Psoas muscle (tissue), 8 donors: ENCODE measurements at regions of chr16 and their contacts with region 1.

Region 1: GRCh38 chr16:3857189-3858043 is 23.1 kb downstream of the CREBBP start:
- DNase-seq: peak in 1 of 2 donors; percentile 46
- ATAC-seq: peak; percentile 86 to 93 (median 92)
- H3K4me3 ChIP-seq: peak overlapping the region; percentile 32
- H3K27ac ChIP-seq: peak overlapping the region; percentile 76
- H3K4me1 ChIP-seq: peaks cover 86% of the 10 kb centered on the region
- H3K27me3 ChIP-seq: no peaks in the 10 kb centered on the region
- CTCF ChIP-seq: no peak

Region 2: DNA sequence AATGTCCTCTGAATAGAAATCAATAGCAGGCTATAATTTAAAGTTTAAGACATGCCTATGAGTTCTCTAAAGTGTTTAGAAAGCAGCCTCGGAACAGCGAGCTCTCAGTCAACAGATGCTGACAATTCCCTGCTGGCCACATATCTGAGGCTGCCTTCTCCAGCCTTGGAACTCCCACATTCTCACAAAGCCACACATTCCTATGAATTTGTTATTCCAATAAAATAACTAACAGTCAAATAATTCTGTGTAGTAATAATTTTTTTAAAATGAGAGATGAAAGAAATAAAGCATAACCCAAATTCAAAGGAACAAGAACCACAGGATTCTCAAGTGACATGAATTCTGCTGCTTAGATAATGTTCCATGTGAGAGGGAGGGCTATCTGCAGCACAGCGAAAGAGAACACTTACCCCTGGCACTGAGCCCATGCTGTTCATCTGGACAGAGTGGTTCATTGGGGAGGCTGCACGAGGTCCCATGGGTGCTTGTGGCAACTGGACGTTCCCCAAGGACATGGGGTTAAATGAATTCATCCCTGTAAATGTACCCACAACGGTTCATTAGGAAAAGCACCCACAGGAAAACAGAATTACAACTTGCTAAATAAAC is 83.2 kb before region 1 on chr16:
- intact Hi-C with region 1: loop called in 1 of 2 experiments (anchors 5 kb)
- DNase-seq: no peak
- ATAC-seq: peak; percentile 44 to 67 (median 58)
- H3K4me3 ChIP-seq: no peak overlapping the region
- H3K27ac ChIP-seq: peak overlapping the region; percentile 46
- H3K4me1 ChIP-seq: peaks cover 25% of the 10 kb centered on the region
- H3K27me3 ChIP-seq: no peaks in the 10 kb centered on the region
- CTCF ChIP-seq: no peak

Region 3: DNA sequence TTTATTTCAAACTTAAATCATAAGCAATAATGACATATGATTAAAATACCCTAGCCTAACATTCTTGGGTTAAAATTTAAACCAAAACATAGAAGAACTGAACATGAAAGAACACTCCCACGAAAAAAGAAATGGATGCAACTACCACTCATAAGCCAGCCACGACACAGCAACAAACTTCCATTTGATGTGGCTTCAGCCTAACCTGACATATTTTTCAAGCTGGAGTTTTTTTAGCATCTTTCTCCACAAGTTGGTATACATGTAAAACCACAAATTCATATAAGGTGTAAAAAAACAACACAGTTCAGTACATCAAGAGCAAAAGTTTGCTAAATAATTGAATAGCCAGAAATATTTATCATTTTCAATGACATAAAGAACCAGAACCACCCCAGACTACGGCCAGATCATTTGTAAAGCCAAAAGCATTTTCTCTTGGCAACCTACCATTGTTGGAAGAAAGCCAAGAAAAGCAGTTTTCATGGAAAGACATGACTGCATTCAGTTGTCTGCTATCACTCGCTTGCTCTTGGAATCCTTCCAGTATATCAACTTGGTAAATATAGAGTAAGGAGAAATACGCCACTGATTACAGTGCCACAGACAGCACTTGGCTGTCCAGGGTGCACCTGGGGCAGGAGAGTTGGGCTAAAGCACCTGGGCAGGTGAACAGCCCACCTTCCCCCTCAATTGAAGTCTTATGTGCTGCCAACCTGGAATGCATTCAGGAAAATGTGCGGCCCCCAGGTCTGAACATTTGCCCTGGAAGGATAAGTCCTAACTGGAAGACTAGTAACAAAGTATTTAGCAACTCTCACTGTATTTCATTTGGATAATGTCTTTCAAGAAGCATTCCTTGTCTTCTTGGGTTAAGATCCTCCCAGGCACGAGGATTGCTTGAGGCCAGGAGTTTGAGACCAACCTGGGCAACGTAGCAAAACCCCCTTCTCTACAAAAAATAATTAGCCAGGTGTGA is 37.4 kb before region 1 on chr16:
- intact Hi-C with region 1: loop called in 1 of 2 experiments (anchors 5 kb)
- DNase-seq: no peak
- ATAC-seq: peak in 3 of 4 donors; percentile 51 to 62 (median 60)
- H3K4me3 ChIP-seq: no peak overlapping the region
- H3K27ac ChIP-seq: peak overlapping the region; percentile 36
- H3K4me1 ChIP-seq: peaks cover 93% of the 10 kb centered on the region
- H3K27me3 ChIP-seq: no peaks in the 10 kb centered on the region
- CTCF ChIP-seq: no peak

Region 4: DNA sequence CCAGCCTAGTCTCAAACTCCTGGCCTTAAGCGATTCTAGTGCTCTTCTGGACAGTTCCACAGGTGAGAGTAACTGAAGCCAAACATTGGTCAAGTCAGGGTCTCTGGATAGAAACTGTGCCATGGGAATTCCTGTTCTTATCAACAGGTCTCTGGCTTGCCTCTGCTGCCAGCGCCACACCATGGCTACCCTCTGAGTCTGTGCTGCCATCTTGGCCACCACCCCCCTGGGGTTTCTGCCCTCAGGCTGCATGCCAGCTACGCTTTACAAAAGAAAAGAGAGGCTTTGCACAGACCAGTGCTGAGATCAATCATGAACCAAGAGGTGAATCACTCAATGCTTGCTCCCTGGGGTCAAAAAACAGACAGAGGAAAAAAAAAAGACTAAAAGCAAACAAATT is 47.5 kb after region 1 on chr16:
- intact Hi-C with region 1: no loop called
- DNase-seq: no peak
- ATAC-seq: no peak
- H3K4me3 ChIP-seq: no peak overlapping the region
- H3K27ac ChIP-seq: no peak overlapping the region
- H3K4me1 ChIP-seq: peaks cover 12% of the 10 kb centered on the region
- H3K27me3 ChIP-seq: no peaks in the 10 kb centered on the region
- CTCF ChIP-seq: no peak